Posterior cingulate gyrus (tissue), 11 donors: ENCODE measurements at regions of chr1 and their contacts with region 1.

Region 1: DNA sequence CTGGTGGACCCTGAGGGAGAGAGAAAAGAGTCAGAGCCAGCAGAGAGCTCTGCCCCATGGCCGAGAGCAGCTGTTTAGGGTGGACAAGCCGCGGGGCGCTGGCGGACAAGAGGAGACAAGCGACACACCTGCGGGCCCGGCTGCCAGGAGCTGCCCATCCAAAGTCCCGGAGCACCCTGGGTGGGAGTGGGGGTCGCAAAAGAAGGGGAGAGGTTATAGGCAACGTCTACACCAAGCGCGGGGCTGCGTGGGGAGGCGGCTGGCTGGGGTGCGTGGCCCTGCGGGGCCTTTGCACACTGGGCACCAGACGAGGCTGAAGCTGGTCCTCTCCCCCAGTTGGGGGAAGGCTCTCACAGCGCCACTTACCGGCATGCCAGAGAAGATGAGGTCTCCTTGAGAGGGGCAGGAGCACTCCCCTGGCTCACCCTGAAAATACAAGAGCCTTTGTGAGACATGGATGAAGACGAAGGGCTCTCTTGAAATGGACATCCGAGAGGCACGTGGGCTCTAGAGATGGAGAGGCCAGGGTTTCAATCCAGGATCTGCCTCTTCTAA is 24.1 kb downstream of the COL16A1 start:
- DNase-seq: no peak

Region 2: DNA sequence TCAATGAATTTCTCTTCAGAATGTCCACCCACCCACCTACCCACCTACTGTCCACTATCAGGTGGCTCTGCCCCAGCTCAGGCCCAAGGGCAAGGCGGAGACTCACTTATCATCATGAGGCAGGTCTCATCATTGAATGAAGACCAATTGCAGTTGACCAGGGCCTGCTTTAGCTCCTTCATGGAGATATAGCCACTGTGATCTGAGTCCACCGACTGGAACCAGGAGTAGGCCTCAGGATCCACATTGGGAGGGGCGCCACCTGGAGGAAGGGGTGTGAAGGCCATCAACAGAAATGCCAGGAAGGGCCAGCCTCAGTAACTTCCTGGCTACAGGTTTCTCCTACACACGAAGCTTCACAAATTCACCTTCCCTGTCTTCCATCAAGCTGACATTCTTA is 46.7 kb before region 1 on chr1:
- intact Hi-C with region 1: loop called (anchors 2 kb)
- DNase-seq: peak in 1 of 10 donors; percentile 57